ENCODE measurements at regions of chr19 and their contacts with region 1.

Region 1: DNA sequence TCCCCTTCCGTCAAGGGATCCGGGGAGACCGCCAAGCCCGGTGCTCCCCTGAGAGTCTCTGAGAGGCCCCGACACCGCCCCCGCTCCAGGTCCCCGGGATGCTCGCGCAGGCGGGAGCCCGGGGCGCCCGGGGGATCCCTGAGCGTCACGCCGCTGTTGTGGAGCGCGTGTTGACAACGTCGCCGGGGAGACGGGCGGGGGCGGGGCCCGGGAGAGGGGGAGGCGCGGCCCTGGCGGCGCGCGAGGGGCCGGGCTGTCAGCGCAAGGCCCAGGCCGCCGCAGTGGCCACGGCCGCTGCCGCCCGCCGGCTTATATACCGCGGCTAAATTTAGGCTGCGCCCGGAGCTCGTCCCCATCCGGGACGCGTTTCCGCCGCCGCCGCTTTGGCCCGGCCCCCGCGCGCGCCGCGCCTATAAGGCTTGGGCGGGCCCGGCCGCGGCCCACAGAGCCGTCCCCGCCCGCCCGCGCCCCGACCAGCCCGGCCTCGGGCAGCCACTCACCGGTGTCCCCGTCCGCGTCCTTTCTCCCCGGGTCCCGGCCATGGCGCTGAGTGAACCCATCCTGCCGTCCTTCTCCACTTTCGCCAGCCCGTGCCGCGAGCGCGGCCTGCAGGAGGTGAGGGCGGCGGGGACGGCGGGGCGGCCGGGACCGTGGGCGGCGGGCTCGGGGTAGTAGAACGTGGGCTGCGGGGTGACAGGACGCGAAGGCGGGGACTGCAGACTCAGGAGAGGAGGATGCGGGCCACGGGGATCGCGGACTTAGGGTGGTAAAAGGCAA is at the start of gene KLF2:
- DNase-seq: peak; percentile 88 to 96 (median 95)
- ATAC-seq: peak; percentile 81
- H3K4me3 ChIP-seq: peak within 1 kb of the TSS; percentile 86
- H3K4me3 Mint-ChIP-seq: peak within 1 kb of the TSS; percentile 51 to 98 (median 85)
- H3K27ac ChIP-seq: peak within 1 kb of the TSS; percentile 98
- H3K27ac Mint-ChIP-seq: peak within 1 kb of the TSS; percentile 85 to 100 (median 96)
- H3K4me1 ChIP-seq: peaks cover 23 to 30% of the 10 kb centered on the region in 2 donors
- H3K4me1 Mint-ChIP-seq: peaks cover 27 to 54% (median 48%) of the 10 kb centered on the region in 7 donors
- H3K27me3 ChIP-seq: no peaks in the 10 kb centered on the region
- H3K27me3 Mint-ChIP-seq: peaks cover 0 to 70% (median 0%) of the 10 kb centered on the region in 5 donors
- total RNA-seq, gene KLF2: 195 to 630 (median 466) TPM

Region 2: DNA sequence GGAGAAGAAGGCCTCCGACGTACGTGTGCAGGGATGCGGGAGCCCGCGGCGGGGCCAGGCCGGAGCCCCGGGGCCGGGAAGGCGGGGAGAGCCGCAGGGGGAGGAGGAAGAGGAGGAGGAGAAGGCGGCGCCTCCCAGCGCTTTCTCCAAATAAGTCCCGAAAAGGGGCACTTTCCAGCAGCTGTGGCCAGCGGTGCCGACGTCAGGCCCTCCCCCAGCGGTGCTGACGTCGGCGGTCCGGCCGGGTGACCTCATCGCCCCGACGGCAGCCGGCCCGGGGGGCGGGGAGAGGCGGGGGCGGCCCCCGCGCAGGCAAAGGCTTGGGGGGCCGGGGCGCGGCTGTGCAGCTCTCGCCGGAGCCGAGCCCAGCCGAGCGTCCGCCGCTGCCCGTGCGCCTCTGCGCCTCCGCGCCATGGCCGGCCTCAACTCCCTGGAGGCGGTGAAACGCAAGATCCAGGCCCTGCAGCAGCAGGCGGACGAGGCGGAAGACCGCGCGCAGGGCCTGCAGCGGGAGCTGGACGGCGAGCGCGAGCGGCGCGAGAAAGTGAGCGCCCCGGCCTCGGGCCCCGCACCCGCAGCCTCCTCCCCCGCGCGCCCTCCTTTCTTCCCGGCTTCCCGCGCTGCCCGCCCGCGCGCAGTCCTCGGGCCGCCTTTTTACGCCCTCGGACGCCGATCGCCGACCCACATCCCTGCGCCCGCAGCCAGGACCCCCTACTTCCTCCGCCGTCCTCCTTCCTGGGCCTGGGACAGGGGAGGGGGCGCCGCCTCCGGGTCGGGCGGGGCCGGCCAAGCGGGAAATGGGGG is 248.2 kb before region 1 on chr19 and contains the start of gene TPM4:
- CTCF ChIA-PET with region 1: no interaction called
- POLR2A ChIA-PET with region 1: interaction called, 9 read pairs
- intact Hi-C with region 1: loop called in 1 of 2 experiments (anchors 2 kb)
- DNase-seq: peak; percentile 43 to 89 (median 50)
- ATAC-seq: peak; percentile 68
- H3K4me3 ChIP-seq: peak within 1 kb of the TSS; percentile 82
- H3K4me3 Mint-ChIP-seq: peak within 1 kb of the TSS; percentile 84 to 97 (median 90)
- H3K27ac ChIP-seq: peak within 1 kb of the TSS; percentile 89
- H3K27ac Mint-ChIP-seq: peak within 1 kb of the TSS; percentile 90 to 99 (median 97)
- H3K4me1 ChIP-seq: peaks cover 29 to 72% of the 10 kb centered on the region in 2 donors
- H3K4me1 Mint-ChIP-seq: peaks cover 54 to 80% (median 65%) of the 10 kb centered on the region in 7 donors
- H3K27me3 ChIP-seq: no peaks in the 10 kb centered on the region
- H3K27me3 Mint-ChIP-seq: no peaks in the 10 kb centered on the region
- total RNA-seq, gene TPM4: 65.8 to 435 (median 126) TPM

Region 3: DNA sequence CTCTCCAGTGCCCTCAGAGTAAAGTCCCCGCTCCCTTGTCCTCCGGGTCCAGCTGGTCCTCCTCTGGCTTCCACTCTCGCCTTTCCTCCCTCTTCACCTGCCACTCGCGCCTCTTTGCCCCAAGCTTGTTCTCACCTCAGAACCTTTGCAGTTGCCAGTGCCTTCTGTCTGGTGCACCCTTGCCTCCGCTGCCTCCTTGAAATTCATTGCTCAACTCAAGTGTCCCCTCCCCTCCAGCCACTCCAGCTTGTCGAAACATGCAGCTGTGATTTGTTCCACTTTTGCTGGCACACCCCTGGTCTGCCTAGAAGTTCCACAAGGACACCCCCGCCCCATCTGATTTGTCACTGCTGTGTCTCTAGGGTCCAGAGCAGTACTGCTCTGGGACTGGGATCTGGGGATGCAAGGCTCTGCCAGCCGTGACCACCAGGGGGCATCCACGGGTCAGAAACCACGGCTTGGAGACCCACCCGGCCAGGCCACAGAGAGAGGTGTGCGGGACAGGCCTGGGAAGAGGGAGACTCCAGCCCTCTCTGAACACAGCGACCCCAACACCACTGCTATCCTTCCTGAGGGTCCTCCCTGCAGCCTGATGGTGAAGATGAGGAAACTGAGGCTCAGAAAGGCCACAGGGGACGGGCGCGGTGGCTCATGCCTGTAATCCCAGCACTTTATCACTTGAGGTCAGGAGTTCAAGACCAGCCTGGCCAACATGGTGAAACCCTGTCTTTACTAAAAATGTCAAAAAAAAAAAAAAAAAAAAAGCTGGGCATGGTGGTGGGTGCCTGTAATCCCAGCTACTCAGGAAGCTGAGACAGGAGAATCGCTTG is 77.0 kb before region 1 on chr19:
- CTCF ChIA-PET with region 1: interaction called, 14 read pairs
- POLR2A ChIA-PET with region 1: interaction called, 101 read pairs
- intact Hi-C with region 1: loop called (anchors 1 to 5 kb)
- DNase-seq: peak; percentile 60 to 89 (median 77)
- ATAC-seq: peak; percentile 95
- H3K4me3 ChIP-seq: no peak overlapping the region
- H3K4me3 Mint-ChIP-seq: peak overlapping the region; percentile 22 to 71 (median 56)
- H3K27ac ChIP-seq: no peak overlapping the region
- H3K27ac Mint-ChIP-seq: peak overlapping the region; percentile 48 to 94 (median 84)
- H3K4me1 ChIP-seq: peaks cover 15 to 24% of the 10 kb centered on the region in 2 donors
- H3K4me1 Mint-ChIP-seq: peaks cover 17 to 38% (median 36%) of the 10 kb centered on the region in 7 donors
- H3K27me3 ChIP-seq: no peaks in the 10 kb centered on the region
- H3K27me3 Mint-ChIP-seq: peaks cover 0 to 7% (median 0%) of the 10 kb centered on the region in 5 donors

Region 4: DNA sequence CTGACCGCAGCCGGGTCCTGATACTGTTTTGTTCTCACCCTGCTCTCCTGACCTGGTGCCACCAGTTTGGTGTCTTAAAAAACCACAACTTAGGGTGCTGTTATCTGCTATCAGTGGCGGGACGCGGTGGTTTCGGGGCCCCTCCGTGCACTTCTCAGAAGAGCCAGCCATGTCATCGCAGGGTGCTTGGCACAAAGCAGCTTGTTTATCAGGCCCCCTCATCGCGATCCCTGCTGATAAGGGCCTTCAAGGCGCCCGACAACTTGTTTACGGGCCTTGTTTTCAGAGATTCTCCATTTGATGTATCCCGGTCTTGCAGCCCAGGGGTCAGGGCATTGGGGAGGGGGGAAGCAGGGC is 58.0 kb before region 1 on chr19:
- CTCF ChIA-PET with region 1: no interaction called
- POLR2A ChIA-PET with region 1: interaction called, 31 read pairs
- intact Hi-C with region 1: loop called (anchors 5 kb)
- DNase-seq: peak in 5 of 9 donors; percentile 22 to 37 (median 32)
- ATAC-seq: peak; percentile 83
- H3K4me3 ChIP-seq: no peak overlapping the region
- H3K4me3 Mint-ChIP-seq: peak overlapping the region in 9 of 10 donors; percentile 44 to 79 (median 62)
- H3K27ac ChIP-seq: no peak overlapping the region
- H3K27ac Mint-ChIP-seq: peak overlapping the region; percentile 56 to 96 (median 85)
- H3K4me1 ChIP-seq: peaks cover 43 to 45% of the 10 kb centered on the region in 2 donors
- H3K4me1 Mint-ChIP-seq: peaks cover 32 to 62% (median 44%) of the 10 kb centered on the region in 7 donors
- H3K27me3 ChIP-seq: no peaks in the 10 kb centered on the region
- H3K27me3 Mint-ChIP-seq: peaks cover 0 to 37% (median 0%) of the 10 kb centered on the region in 5 donors

Region 5: DNA sequence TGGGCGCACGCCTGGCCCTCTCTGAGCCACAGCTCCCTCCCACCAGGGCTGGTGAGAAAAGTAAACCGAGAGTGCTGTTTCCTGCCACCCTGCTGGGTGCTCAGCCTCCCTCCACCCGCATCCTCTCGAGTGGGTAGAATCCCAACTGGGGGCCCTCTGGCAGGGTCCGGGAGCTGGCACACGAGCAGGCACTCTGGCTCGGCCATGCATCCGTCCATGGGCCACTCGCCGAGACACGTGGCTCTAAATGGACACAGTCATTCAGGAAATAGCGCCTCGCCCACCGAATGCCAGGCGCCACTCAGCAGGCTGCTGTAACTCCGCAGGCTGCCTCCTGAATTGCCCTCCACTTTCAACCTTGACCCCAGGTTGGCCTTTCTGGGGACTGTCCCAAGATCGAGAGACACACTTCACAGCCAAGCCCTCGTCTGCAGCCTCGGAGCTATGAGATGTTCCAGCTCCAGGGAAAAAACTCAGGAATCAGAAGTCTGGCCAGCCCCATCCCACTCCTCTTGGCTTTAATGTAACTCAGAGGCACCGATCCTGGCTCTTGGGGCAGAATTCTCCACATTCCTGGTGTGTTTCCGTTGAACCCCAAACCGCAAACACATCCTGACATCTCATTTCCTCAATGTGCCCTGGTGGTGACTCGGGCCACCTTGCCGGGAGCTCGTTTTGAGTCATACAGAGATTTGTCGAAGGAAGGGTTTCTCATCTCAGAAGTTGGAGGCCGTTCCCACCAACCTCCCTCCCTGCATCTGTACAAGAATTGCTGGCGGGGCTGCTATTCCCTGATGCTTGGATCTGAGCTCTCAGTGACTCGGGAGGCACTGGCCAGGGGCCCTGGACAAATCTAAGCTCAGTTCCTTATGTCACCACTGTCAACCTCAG is 14.1 kb after region 1 on chr19:
- CTCF ChIA-PET with region 1: interaction called, 7 read pairs
- POLR2A ChIA-PET with region 1: interaction called, 323 read pairs
- intact Hi-C with region 1: loop called in 1 of 2 experiments (anchors 2 kb)
- DNase-seq: peak in 5 of 9 donors; percentile 30 to 68 (median 50)
- ATAC-seq: peak; percentile 54
- H3K4me3 ChIP-seq: peak overlapping the region; percentile 44
- H3K4me3 Mint-ChIP-seq: peak overlapping the region; percentile 79 to 95 (median 88)
- H3K27ac ChIP-seq: peak overlapping the region; percentile 60
- H3K27ac Mint-ChIP-seq: peak overlapping the region; percentile 86 to 98 (median 91)
- H3K4me1 ChIP-seq: peaks cover 54 to 57% of the 10 kb centered on the region in 2 donors
- H3K4me1 Mint-ChIP-seq: peaks cover 28 to 78% (median 64%) of the 10 kb centered on the region in 7 donors
- H3K27me3 ChIP-seq: no peaks in the 10 kb centered on the region
- H3K27me3 Mint-ChIP-seq: peaks cover 0 to 22% (median 0%) of the 10 kb centered on the region in 5 donors

Region 6: GRCh38 chr19:16417660-16418596 is 93.4 kb after region 1 on chr19:
- CTCF ChIA-PET with region 1: no interaction called
- POLR2A ChIA-PET with region 1: interaction called, 16 read pairs
- intact Hi-C with region 1: no loop called
- DNase-seq: peak; percentile 62 to 82 (median 66)
- ATAC-seq: peak; percentile 93
- H3K4me3 ChIP-seq: no peak overlapping the region
- H3K4me3 Mint-ChIP-seq: no peak overlapping the region
- H3K27ac ChIP-seq: no peak overlapping the region
- H3K27ac Mint-ChIP-seq: peak overlapping the region in 5 of 9 donors; percentile 28 to 72 (median 63)
- H3K4me1 ChIP-seq: no peaks in the 10 kb centered on the region
- H3K4me1 Mint-ChIP-seq: peaks cover 2 to 14% (median 6%) of the 10 kb centered on the region in 7 donors
- H3K27me3 ChIP-seq: no peaks in the 10 kb centered on the region
- H3K27me3 Mint-ChIP-seq: no peaks in the 10 kb centered on the region

Measured in naive thymus-derived CD4-positive, alpha-beta T cell (primary cell).